Left colon (tissue), 2 donors: ENCODE measurements at regions of chr6 and their contacts with region 1.

Region 1: DNA sequence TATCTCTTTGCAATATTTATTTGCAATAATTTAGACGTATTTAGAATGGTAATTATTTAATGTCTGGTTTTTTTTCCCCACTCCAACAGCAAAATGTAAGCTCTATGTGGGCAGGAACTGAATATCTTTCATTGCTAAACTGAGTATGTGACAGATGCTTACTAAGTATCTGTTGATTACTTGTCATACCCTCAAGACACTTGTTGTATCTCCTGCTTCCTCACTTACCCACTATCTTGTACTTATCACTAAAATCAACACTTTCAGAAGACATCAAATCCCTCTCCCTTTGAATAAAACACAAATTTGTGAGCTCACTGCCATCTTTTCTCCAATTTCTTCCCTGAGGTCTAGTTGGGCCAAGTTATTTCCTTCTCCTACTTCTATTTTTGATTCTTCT is 30.3 kb downstream of the PPIL4 start:
- DNase-seq: no peak
- ATAC-seq: no peak

Region 2: GRCh38 chr6:149028767-149029405 is 486.6 kb before region 1 on chr6:
- intact Hi-C with region 1: loop called in 1 of 2 experiments (anchors 5 kb)
- DNase-seq: peak; percentile 46 to 63
- ATAC-seq: peak; percentile 86